Naive thymus-derived CD4-positive, alpha-beta T cell (primary cell): ENCODE measurements at regions of chr7 and their contacts with region 1.

Region 1: DNA sequence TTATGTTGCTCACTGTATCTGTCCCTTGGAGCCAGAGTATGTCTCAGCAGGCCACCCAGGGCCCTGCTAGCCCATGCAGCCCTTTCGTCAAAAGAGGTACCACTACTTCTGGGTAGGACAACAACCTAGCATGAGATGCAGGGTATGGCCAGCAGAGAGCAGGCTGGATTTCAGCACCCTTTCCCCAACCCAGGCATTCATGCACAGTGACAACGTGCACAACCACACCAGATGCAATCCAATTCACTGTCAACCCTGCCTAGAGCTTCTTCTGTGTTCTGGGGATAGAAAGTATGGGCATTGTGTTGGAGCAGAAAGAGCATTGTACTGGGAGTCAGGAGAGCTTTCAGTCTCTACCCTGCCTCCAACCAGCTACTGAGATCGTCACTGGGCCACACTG is 37.9 kb downstream of the JAZF1 start:
- DNase-seq: no peak
- ATAC-seq: peak; percentile 61
- H3K4me3 ChIP-seq: no peak overlapping the region
- H3K4me3 Mint-ChIP-seq: no peak overlapping the region
- H3K27ac ChIP-seq: no peak overlapping the region
- H3K27ac Mint-ChIP-seq: peak overlapping the region in 1 of 9 donors; percentile 6
- H3K4me1 ChIP-seq: no peaks in the 10 kb centered on the region
- H3K4me1 Mint-ChIP-seq: peaks cover 0 to 7% (median 0%) of the 10 kb centered on the region in 7 donors
- H3K27me3 ChIP-seq: no peaks in the 10 kb centered on the region
- H3K27me3 Mint-ChIP-seq: peaks cover 0 to 2% (median 0%) of the 10 kb centered on the region in 5 donors

Region 2: DNA sequence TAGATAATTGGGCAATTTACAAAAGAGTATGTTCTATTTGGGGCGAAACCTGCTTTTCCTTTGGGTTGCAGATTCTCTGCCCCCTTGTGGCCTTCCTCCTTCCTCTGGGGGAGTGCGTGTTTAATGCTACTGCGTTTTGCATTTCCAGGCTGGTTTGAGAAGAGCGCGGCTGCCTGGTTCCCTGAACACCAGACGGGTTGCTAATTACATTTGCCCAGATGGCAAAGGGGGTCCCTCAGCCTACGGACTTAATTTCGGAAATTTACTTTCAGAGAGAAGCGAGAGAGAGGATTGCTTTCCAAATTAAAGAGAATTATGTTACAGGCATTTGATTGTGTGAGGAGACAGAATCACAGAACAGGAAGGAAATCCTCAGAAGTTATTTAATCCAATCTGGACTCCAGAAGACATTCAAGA is 129.8 kb after region 1 on chr7:
- CTCF ChIA-PET with region 1: interaction called, 3 read pairs
- POLR2A ChIA-PET with region 1: no interaction called
- intact Hi-C with region 1: loop called in 1 of 2 experiments (anchors 1 kb)
- DNase-seq: peak in 6 of 9 donors; percentile 7 to 20 (median 15)
- ATAC-seq: peak; percentile 73
- H3K4me3 ChIP-seq: no peak overlapping the region
- H3K4me3 Mint-ChIP-seq: peak overlapping the region in 8 of 10 donors; percentile 3 to 78 (median 62)
- H3K27ac ChIP-seq: no peak overlapping the region
- H3K27ac Mint-ChIP-seq: peak overlapping the region in 1 of 9 donors; percentile 31
- H3K4me1 ChIP-seq: no peaks in the 10 kb centered on the region
- H3K4me1 Mint-ChIP-seq: peaks cover 0 to 7% (median 5%) of the 10 kb centered on the region in 7 donors
- H3K27me3 ChIP-seq: no peaks in the 10 kb centered on the region
- H3K27me3 Mint-ChIP-seq: peaks cover 5 to 40% (median 24%) of the 10 kb centered on the region in 5 donors